ENCODE measurements at regions of chr9 and their contacts with region 1.

Region 1: GRCh38 chr9:3732077-3733038 is 206.6 kb upstream of the RFX3 start:
- DNase-seq: peak; percentile 41
- H3K4me3 ChIP-seq: peak overlapping the region in 1 of 4 donors; percentile 29
- H3K27ac ChIP-seq: peak overlapping the region in 2 of 4 donors; percentile 24 to 29
- H3K4me1 ChIP-seq: peaks cover 0 to 8% (median 3%) of the 10 kb centered on the region in 4 donors
- H3K27me3 ChIP-seq: no peaks in the 10 kb centered on the region
- CTCF ChIP-seq: peak; percentile 59 to 87 (median 73)
- EP300 ChIP-seq: no peak
- POLR2A ChIP-seq: no peak

Region 2: DNA sequence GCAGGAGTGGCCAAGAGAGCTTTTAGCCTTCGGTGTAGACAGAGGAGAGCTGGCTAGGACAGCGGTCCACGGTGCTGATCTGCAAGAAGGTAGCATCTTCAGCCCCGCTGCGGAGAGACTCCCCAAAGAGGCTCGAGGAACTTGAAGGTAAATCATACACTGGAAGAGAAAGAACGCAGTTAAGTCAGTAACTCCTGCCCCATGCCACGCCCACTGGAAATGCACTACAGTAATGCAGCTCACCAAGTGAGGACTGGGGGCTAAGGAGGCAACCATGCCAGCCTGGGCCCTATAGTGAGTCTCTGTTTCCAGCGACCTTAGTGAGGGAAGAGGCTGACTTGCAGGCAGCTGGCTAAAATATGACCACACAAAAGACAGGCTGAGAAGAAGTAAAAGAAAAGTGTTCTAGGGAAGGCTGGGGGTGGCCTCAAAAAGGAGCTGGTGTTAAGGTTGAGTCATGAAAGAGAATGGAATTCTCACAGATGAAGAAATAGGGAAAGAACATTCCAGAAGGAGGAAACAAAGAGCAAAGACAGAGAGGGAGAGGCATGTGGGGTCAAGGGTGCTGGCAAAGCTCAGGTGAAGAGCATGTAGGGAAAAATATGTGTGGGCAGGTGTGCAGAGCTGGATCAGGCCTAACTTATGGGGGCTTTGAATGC is 96.0 kb after region 1 on chr9:
- in situ Hi-C with region 1: no loop called
- intact Hi-C with region 1: no loop called
- DNase-seq: no peak
- H3K4me3 ChIP-seq: no peak overlapping the region
- H3K27ac ChIP-seq: no peak overlapping the region
- H3K4me1 ChIP-seq: peaks cover 0 to 8% (median 3%) of the 10 kb centered on the region in 4 donors
- H3K27me3 ChIP-seq: no peaks in the 10 kb centered on the region
- CTCF ChIP-seq: no peak
- EP300 ChIP-seq: no peak
- POLR2A ChIP-seq: no peak

Region 3: GRCh38 chr9:4073371-4073770 is 341.0 kb after region 1 on chr9:
- in situ Hi-C with region 1: loop called in 2 of 4 experiments (anchors 25 kb)
- intact Hi-C with region 1: no loop called
- DNase-seq: no peak
- H3K4me3 ChIP-seq: no peak overlapping the region
- H3K27ac ChIP-seq: no peak overlapping the region
- H3K4me1 ChIP-seq: peaks cover 0 to 22% (median 12%) of the 10 kb centered on the region in 4 donors
- H3K27me3 ChIP-seq: no peaks in the 10 kb centered on the region
- CTCF ChIP-seq: peak in 2 of 5 experiments; percentile 11 to 18
- EP300 ChIP-seq: no peak
- POLR2A ChIP-seq: no peak

Region 4: GRCh38 chr9:4339357-4339756 is 607.0 kb after region 1 on chr9:
- in situ Hi-C with region 1: loop called in 2 of 4 experiments (anchors 10 to 25 kb)
- intact Hi-C with region 1: no loop called
- DNase-seq: peak; percentile 87
- H3K4me3 ChIP-seq: no peak overlapping the region
- H3K27ac ChIP-seq: no peak overlapping the region
- H3K4me1 ChIP-seq: peaks cover 0 to 3% (median 0%) of the 10 kb centered on the region in 4 donors
- H3K27me3 ChIP-seq: no peaks in the 10 kb centered on the region
- CTCF ChIP-seq: peak; percentile 83 to 93 (median 91)
- EP300 ChIP-seq: no peak
- POLR2A ChIP-seq: no peak

Region 5: DNA sequence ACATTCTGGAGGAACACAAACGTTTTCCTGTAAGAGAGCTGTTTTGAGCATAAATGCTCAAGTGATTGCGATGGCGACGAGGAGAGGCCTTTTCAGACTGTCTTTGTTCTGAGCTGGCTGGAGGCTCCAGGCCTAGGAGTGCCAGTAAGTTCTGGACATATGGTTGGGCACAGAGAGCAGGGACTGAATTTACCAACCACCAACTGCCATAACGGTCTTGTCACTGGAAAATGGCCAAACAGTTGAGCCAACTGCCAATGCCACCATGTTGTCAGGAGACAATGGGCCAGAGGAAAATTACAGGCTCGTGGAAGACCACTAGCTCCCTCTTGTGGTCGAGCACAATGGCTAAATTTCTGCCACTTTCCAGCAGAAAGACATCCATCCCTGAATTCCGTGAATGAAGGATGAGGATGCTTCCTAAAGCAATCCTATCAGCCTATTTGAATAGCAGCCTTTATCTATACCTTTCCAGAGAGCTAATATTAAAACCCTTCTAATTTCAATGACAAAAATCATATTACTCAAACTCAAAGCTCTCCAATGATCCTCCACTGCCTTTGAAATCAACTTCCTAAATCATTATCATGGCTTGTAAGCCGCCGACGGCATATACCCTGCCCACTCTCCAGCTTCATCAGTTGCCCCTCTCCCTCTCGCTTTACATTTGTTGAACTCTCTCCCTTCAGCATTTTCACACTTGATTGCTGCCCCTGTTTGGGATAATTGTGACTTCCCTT is 634.4 kb after region 1 on chr9:
- in situ Hi-C with region 1: loop called in 2 of 4 experiments (anchors 10 to 25 kb)
- intact Hi-C with region 1: loop called (anchors 10 kb)
- DNase-seq: peak; percentile 19
- H3K4me3 ChIP-seq: no peak overlapping the region
- H3K27ac ChIP-seq: no peak overlapping the region
- H3K4me1 ChIP-seq: no peaks in the 10 kb centered on the region
- H3K27me3 ChIP-seq: no peaks in the 10 kb centered on the region
- CTCF ChIP-seq: peak; percentile 53 to 69 (median 66)
- EP300 ChIP-seq: no peak
- POLR2A ChIP-seq: no peak

Measured in transverse colon (tissue), 4 donors.